ENCODE measurements at regions of chr11 and their contacts with region 1.

Region 1: GRCh38 chr11:58039589-58039988 is 8.8 kb downstream of the OR6Q1 start:
- DNase-seq: no peak
- ATAC-seq: no peak
- H3K4me3 ChIP-seq: no peak overlapping the region
- H3K27ac ChIP-seq: no peak overlapping the region
- H3K4me1 ChIP-seq: no peaks in the 10 kb centered on the region
- H3K27me3 ChIP-seq: no peaks in the 10 kb centered on the region
- CTCF ChIP-seq: no peak
- POLR2A ChIP-seq: no peak

Region 2: DNA sequence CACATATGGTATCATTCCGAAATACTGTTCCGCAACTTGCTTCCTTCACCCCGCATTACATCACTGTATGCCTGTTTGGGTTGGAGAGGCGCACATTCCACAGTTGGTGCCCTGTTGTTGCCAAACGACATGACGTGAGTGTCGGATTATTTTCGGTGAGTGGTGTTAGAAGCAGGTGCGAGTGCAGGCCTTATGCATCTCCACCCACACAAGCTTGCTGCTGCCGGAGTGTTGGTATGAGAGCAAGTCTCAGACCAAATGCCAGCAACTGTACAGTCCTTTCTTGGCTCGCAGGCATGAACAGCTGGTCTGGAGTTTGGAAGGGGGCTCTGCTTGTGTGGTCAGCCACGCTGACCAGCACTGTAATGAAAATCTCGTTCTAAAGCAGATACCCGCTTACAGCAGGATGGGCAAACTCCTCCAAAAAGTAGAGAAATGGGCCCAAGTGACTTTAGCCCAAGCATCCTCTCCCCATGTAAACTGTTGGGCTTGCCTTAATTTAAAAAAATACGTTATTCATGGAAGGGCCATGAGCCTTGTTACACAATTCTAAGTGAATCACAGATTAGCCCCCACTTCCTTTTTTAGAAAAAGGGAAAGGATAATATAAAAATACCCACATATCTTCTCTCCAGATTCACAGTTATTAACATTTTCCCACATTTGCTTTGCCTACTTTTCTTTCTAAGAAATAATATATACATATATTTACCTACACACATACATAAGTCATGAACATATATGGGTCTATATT is 64.6 kb before region 1 on chr11:
- intact Hi-C with region 1: no loop called
- DNase-seq: no peak
- ATAC-seq: peak in 1 of 4 donors; percentile 20
- H3K4me3 ChIP-seq: no peak overlapping the region
- H3K27ac ChIP-seq: no peak overlapping the region
- H3K4me1 ChIP-seq: no peaks in the 10 kb centered on the region
- H3K27me3 ChIP-seq: no peaks in the 10 kb centered on the region
- CTCF ChIP-seq: no peak
- POLR2A ChIP-seq: no peak

Region 3: DNA sequence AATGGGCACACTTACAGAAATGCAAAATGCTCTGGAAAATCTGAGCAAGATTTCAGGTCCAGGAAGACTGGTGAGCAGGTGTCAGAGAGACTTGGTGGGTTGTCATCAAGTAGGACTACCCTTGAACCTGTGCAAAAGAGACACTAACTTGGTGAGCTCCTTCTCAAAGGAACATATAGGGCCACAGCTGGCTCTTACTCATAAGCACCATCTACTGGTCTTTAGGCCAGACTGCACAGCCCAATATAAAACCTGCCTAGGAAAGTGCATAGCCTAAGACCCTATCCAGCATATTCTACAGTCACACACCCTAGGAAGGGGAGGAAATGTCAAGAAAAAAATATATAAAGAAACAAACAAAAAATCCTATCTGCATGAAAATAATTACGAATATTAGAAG is 246.7 kb after region 1 on chr11:
- intact Hi-C with region 1: loop called in 1 of 10 experiments (anchors 10 kb)
- DNase-seq: no peak
- ATAC-seq: peak in 3 of 4 donors; percentile 50 to 59 (median 58)
- H3K4me3 ChIP-seq: no peak overlapping the region
- H3K27ac ChIP-seq: peak overlapping the region in 1 of 12 donors; percentile 7
- H3K4me1 ChIP-seq: peaks cover 0 to 5% (median 0%) of the 10 kb centered on the region in 12 donors
- H3K27me3 ChIP-seq: no peaks in the 10 kb centered on the region
- CTCF ChIP-seq: peak; percentile 28 to 65 (median 52)
- POLR2A ChIP-seq: no peak